WTC11 (cell line): ENCODE measurements at regions of chr1 and their contacts with region 1.

Region 1: DNA sequence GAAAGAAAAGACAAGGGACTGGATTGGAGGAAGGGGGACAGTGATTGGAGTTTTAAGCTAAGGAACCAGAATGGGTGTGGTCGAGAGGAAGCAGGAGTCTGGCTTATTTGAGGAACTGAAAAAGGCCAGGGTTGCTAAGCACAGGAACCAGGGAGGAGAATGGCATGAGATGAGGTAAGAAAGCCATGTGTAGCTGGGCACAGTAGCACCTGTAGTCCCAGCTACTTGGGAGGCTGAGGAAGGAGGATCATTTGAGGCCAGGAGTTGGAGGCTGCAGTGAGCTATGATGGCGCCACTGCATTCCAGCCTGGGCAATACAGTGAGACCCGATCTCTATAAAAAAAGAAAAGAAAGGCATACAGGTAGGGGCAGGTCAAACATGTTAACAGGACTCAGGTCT is 8.1 kb upstream of the KHDRBS1 start:
- DNase-seq: no peak
- ATAC-seq: no peak
- H3K4me3 Mint-ChIP-seq: no peak overlapping the region
- H3K27ac Mint-ChIP-seq: no peak overlapping the region
- H3K4me1 Mint-ChIP-seq: peaks cover 28% of the 10 kb centered on the region
- H3K27me3 Mint-ChIP-seq: peaks cover 4% of the 10 kb centered on the region; the same call in 1 of the 2 replicates
- CTCF ChIP-seq: no peak

Region 2: GRCh38 chr1:31977385-31978131 is 28.0 kb before region 1 on chr1:
- CTCF ChIA-PET with region 1: interaction called, 29 read pairs
- POLR2A ChIA-PET with region 1: no interaction called
- DNase-seq: peak; percentile 67
- ATAC-seq: peak; percentile 98
- H3K4me3 Mint-ChIP-seq: no peak overlapping the region
- H3K27ac Mint-ChIP-seq: peak overlapping the region; percentile 90
- H3K4me1 Mint-ChIP-seq: peaks cover 16% of the 10 kb centered on the region
- H3K27me3 Mint-ChIP-seq: no peaks in the 10 kb centered on the region
- CTCF ChIP-seq: peak; percentile 21; the same call in 1 of the 2 replicates

Region 3: GRCh38 chr1:31984419-31985347 is 20.8 kb before region 1 on chr1:
- CTCF ChIA-PET with region 1: interaction called, 14 read pairs
- POLR2A ChIA-PET with region 1: no interaction called
- DNase-seq: no peak
- ATAC-seq: no peak
- H3K4me3 Mint-ChIP-seq: no peak overlapping the region
- H3K27ac Mint-ChIP-seq: no peak overlapping the region
- H3K4me1 Mint-ChIP-seq: peaks cover 24% of the 10 kb centered on the region
- H3K27me3 Mint-ChIP-seq: no peaks in the 10 kb centered on the region
- CTCF ChIP-seq: no peak

Region 4: GRCh38 chr1:32045772-32046171 is 40.2 kb after region 1 on chr1:
- CTCF ChIA-PET with region 1: no interaction called
- POLR2A ChIA-PET with region 1: no interaction called
- DNase-seq: no peak
- ATAC-seq: no peak
- H3K4me3 Mint-ChIP-seq: no peak overlapping the region
- H3K27ac Mint-ChIP-seq: peak overlapping the region; percentile 33; the same call in 1 of the 2 replicates
- H3K4me1 Mint-ChIP-seq: no peaks in the 10 kb centered on the region
- H3K27me3 Mint-ChIP-seq: no peaks in the 10 kb centered on the region
- CTCF ChIP-seq: no peak

Region 5: DNA sequence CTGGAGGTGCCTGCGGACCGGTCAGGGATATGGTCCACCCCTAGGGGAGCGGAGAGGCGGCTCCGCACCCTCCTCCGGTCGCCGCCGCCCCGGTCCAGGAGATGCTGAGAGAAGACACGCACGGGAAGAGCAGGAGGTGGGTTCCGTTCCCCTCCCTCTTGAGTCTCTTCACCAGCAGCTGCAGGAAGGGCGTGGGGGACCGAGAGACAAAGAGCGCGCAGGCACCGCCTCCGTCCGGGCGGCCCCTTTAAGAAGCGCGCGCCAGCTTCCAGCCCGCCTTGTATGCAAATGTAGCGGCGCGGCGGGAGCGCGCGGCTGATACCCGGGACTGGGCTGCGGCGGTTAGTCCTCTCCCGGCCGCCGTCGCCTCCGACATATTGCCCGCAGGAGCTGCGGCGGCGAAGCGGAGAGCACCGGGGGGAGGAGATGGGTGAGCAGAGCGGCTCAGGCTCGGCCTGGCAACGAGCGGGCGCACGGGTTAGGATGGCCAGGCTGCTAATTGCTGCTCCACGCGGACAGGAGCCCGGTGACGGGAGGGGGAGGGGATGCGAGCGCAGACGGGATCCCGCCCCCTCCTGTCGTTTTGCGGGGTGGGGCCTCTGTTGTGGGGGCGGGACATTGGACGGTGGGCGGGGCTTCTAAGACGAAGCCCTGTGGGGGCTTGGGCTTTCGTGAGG is 67.2 kb after region 1 on chr1 and contains the start of gene TMEM39B:
- CTCF ChIA-PET with region 1: interaction called, 10 read pairs
- POLR2A ChIA-PET with region 1: no interaction called
- DNase-seq: peak; percentile 95
- ATAC-seq: peak; percentile 72
- H3K4me3 Mint-ChIP-seq: peak within 1 kb of the TSS; percentile 77
- H3K27ac Mint-ChIP-seq: peak within 1 kb of the TSS; percentile 96
- H3K4me1 Mint-ChIP-seq: peaks cover 22% of the 10 kb centered on the region
- H3K27me3 Mint-ChIP-seq: no peaks in the 10 kb centered on the region; the same call in 1 of the 2 replicates
- CTCF ChIP-seq: no peak
- total RNA-seq, gene TMEM39B: 18.8 to 25.8 TPM (median 23.8 TPM) in 3 replicates